ENCODE measurements at regions of chr14 and their contacts with region 1.

Region 1: DNA sequence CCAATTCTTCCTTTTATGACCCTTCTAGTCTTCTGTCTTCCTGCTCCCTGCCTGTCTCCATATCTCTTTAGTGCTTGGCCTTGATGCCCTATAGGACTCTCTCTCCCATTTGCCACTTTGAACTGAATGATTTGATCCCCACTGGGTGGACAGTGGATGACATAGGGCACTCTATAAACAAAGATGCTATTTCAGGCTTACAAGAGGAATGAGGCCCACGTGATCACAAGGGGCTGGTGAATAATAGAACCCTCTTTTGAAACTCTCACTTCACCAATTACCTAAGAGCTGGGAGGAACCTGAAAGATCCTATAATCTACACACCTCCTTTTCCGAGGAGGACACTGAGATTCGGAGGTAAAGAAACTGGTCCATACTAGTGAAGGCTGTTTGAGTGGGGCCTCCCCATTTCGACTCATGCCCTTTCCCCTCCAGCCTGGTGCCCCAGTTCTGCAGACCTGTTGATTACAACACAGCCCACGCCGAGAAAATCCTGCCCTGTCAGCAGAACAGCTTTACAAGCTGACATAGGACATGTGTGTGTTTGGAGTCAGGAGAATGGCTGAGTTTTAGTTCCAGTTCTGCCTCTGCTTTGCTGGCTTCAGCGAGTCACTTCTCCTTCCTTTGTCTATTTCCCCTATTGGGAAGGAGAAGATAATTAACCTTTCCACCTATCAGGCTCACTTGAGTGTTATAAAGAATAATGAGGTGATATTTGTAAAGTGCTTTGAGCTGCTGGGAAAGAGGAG is 400.3 kb downstream of the ZFP36L1 start:
- DNase-seq: peak in 1 of 2 donors; percentile 87
- ATAC-seq: peak; percentile 37
- H3K4me3 ChIP-seq: no peak overlapping the region
- H3K27ac ChIP-seq: peak overlapping the region; percentile 85 to 94
- H3K4me1 ChIP-seq: peaks cover 7 to 10% of the 10 kb centered on the region in 2 donors
- H3K27me3 ChIP-seq: no peaks in the 10 kb centered on the region

Region 2: GRCh38 chr14:68172627-68173026 is 219.9 kb before region 1 on chr14:
- intact Hi-C with region 1: no loop called
- DNase-seq: no peak
- ATAC-seq: no peak
- H3K4me3 ChIP-seq: no peak overlapping the region
- H3K27ac ChIP-seq: no peak overlapping the region
- H3K4me1 ChIP-seq: peaks cover 0 to 2% of the 10 kb centered on the region in 2 donors
- H3K27me3 ChIP-seq: no peaks in the 10 kb centered on the region

Region 3: GRCh38 chr14:68307014-68307789 is 85.4 kb before region 1 on chr14:
- intact Hi-C with region 1: loop called in 1 of 2 experiments (anchors 5 kb)
- DNase-seq: no peak
- ATAC-seq: peak; percentile 54
- H3K4me3 ChIP-seq: no peak overlapping the region
- H3K27ac ChIP-seq: peak overlapping the region; percentile 71 to 76
- H3K4me1 ChIP-seq: peaks cover 0 to 4% of the 10 kb centered on the region in 2 donors
- H3K27me3 ChIP-seq: no peaks in the 10 kb centered on the region

Region 4: GRCh38 chr14:68466491-68467032 is 74.0 kb after region 1 on chr14:
- intact Hi-C with region 1: loop called in 1 of 2 experiments (anchors 5 kb)
- DNase-seq: peak in 1 of 2 donors; percentile 51
- ATAC-seq: peak; percentile 64
- H3K4me3 ChIP-seq: no peak overlapping the region
- H3K27ac ChIP-seq: peak overlapping the region in 1 of 2 donors; percentile 17
- H3K4me1 ChIP-seq: peaks cover 4 to 6% of the 10 kb centered on the region in 2 donors
- H3K27me3 ChIP-seq: no peaks in the 10 kb centered on the region

Region 5: GRCh38 chr14:68685419-68686204 is 293.0 kb after region 1 on chr14:
- intact Hi-C with region 1: loop called (anchors 5 kb)
- DNase-seq: no peak
- ATAC-seq: no peak
- H3K4me3 ChIP-seq: no peak overlapping the region
- H3K27ac ChIP-seq: no peak overlapping the region
- H3K4me1 ChIP-seq: peaks cover 2 to 11% of the 10 kb centered on the region in 2 donors
- H3K27me3 ChIP-seq: no peaks in the 10 kb centered on the region

Measured in aorta (tissue), 5 donors.